ENCODE measurements at regions of chr3 and their contacts with region 1.

Region 1: DNA sequence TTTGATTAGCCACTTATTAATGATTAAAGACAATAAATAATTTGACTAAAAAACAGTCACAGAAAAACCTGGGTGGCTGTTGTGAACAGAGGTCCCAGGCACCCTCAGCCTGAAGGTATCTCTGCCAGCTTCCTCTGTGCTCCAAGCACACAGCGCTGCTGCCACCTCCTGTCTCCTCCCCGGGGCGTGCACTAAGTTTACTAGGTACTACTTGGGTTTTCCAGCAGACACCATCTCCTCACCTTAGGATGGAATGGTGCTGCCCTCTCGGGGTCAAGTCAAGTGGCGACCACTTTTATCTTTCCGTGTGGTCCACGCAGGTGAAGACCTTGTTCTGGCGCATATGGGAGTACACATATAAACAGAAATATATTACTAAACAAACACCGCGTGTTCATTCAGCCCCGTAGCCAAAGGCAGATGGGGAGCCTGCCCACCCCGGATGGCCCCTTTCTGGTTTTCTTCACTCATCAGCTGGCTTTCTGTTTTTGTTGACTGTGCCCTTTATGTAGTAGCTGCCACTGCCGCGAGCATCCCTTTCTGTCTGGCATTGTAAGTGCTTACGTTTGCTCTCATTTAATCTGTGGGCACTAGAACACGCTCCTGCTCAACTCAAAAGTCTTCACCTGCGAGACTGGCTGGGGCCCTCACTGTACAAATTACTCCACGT is 128.0 kb downstream of the LRIG1 start:
- DNase-seq: no peak
- ATAC-seq: peak; percentile 62 to 77 (median 69)
- H3K4me3 ChIP-seq: no peak overlapping the region
- H3K27ac ChIP-seq: no peak overlapping the region
- H3K4me1 ChIP-seq: peaks cover 18% of the 10 kb centered on the region
- H3K27me3 ChIP-seq: no peaks in the 10 kb centered on the region
- CTCF ChIP-seq: peak; percentile 31

Region 2: DNA sequence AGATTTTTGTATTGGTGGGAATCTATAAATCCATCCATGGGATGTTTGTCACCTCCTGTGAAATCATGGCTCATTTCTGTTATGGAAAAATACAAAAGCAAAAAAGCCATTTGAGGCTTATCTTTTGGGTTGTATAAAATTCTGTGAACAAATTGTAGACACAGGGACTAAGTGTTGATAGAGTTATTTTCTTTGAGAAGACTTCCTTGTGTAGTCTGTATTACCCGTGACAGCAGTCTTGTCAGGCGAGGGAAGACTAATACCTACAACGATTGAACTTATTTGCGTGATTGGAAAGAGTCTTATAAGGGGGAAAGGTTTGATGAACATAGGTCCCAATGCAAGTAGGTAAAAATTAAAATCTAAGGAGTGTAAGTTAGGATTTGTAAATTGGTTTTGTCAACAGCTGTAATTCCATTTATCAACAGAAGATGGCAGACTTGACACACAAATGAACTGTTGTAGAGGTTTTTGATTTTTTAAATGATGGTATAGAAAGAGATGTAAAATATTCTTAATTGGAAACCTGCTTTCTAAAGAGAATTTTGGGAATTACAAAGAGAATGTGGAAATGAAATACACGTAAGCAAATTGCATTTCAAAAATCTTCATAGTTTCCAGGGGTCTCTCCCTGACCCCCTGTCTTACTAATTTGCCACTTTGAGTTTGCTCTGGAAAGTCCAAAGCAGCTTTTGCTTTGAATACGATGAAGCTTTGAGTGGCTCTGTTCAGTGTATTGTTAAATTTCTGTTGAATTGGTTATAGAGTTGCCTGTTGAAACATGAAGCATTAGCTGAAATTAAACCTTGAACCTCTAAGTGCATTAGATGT is 118.8 kb before region 1 on chr3:
- intact Hi-C with region 1: loop called in 1 of 2 experiments (anchors 5 kb)
- DNase-seq: no peak
- ATAC-seq: peak in 1 of 4 donors; percentile 70
- H3K4me3 ChIP-seq: no peak overlapping the region
- H3K27ac ChIP-seq: no peak overlapping the region
- H3K4me1 ChIP-seq: no peaks in the 10 kb centered on the region
- H3K27me3 ChIP-seq: no peaks in the 10 kb centered on the region
- CTCF ChIP-seq: peak; percentile 88

Region 3: GRCh38 chr3:66326340-66326739 is 46.5 kb before region 1 on chr3:
- intact Hi-C with region 1: loop called in 1 of 2 experiments (anchors 5 kb)
- DNase-seq: peak in 1 of 2 donors; percentile 69
- ATAC-seq: peak; percentile 86 to 96 (median 92)
- H3K4me3 ChIP-seq: peak overlapping the region; percentile 9
- H3K27ac ChIP-seq: no peak overlapping the region
- H3K4me1 ChIP-seq: peaks cover 14% of the 10 kb centered on the region
- H3K27me3 ChIP-seq: no peaks in the 10 kb centered on the region
- CTCF ChIP-seq: no peak

Region 4: GRCh38 chr3:66407611-66408218 is 34.9 kb after region 1 on chr3:
- intact Hi-C with region 1: no loop called
- DNase-seq: peak; percentile 78 to 88
- ATAC-seq: peak; percentile 72 to 74 (median 73)
- H3K4me3 ChIP-seq: no peak overlapping the region
- H3K27ac ChIP-seq: peak overlapping the region; percentile 72
- H3K4me1 ChIP-seq: peaks cover 60% of the 10 kb centered on the region
- H3K27me3 ChIP-seq: no peaks in the 10 kb centered on the region
- CTCF ChIP-seq: peak; percentile 93